Activated naive CD4-positive, alpha-beta T cell treated with anti-CD3 and anti-CD28 coated beads for 36 hours (primary cell): ENCODE measurements at regions of chr13 and their contacts with region 1.

Region 1: GRCh38 chr13:25574437-25575411 is 202.9 kb downstream of the ATP8A2 start:
- DNase-seq: peak; percentile 89
- H3K4me3 Mint-ChIP-seq: no peak overlapping the region
- H3K27ac Mint-ChIP-seq: no peak overlapping the region
- H3K4me1 Mint-ChIP-seq: no peaks in the 10 kb centered on the region
- H3K27me3 Mint-ChIP-seq: peaks cover 26% of the 10 kb centered on the region

Region 2: GRCh38 chr13:25319771-25320170 is 255.0 kb before region 1 on chr13:
- CTCF ChIA-PET with region 1: no interaction called
- intact Hi-C with region 1: no loop called
- DNase-seq: no peak
- H3K4me3 Mint-ChIP-seq: no peak overlapping the region
- H3K27ac Mint-ChIP-seq: no peak overlapping the region
- H3K4me1 Mint-ChIP-seq: peaks cover 7% of the 10 kb centered on the region
- H3K27me3 Mint-ChIP-seq: no peaks in the 10 kb centered on the region

Region 3: DNA sequence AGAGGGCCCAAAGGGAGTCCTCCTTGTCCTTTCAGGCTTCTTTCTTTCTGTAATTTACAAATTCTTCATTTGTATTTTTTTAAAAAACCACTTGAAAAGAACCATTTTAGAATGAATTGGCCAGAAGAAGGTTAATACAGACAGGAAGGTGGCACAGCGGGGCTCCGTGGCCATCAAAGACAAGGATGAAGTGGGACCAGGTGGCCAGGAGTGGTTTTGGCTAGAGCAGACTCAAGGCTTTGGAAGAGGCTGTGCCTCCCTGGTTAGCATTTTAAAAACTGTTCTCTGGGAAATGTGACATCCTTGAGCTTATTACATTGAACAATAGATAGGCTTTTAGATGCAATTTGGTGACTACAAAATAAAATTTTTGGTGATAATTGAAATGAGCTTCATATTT is 154.6 kb before region 1 on chr13:
- CTCF ChIA-PET with region 1: no interaction called
- intact Hi-C with region 1: no loop called
- DNase-seq: no peak
- H3K4me3 Mint-ChIP-seq: no peak overlapping the region
- H3K27ac Mint-ChIP-seq: no peak overlapping the region
- H3K4me1 Mint-ChIP-seq: no peaks in the 10 kb centered on the region
- H3K27me3 Mint-ChIP-seq: peaks cover 37% of the 10 kb centered on the region

Region 4: DNA sequence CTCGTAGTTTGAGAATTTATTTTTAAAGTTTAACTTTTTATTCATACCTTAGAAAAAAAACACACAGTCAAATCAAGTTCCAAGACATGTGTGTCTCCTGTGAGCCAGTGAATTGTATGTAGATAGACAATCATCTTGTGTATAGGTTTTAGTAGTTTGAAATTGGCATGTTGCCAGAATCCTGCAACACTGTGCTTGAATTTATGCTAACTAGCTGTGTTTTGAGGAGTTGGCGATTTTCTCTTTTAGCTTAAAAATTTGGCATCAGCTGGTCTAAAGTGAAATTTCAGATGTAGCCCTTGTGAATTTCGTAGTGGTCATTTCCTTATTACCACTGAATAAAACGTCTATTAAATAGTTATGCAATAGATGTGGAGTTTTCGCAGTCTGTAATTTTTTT is 10.3 kb after region 1 on chr13:
- CTCF ChIA-PET with region 1: interaction called, 10 read pairs
- intact Hi-C with region 1: no loop called
- DNase-seq: no peak
- H3K4me3 Mint-ChIP-seq: no peak overlapping the region
- H3K27ac Mint-ChIP-seq: no peak overlapping the region
- H3K4me1 Mint-ChIP-seq: no peaks in the 10 kb centered on the region
- H3K27me3 Mint-ChIP-seq: peaks cover 14% of the 10 kb centered on the region

Region 5: GRCh38 chr13:25733001-25733491 is 158.3 kb after region 1 on chr13:
- CTCF ChIA-PET with region 1: no interaction called
- intact Hi-C with region 1: no loop called
- DNase-seq: no peak
- H3K4me3 Mint-ChIP-seq: no peak overlapping the region
- H3K27ac Mint-ChIP-seq: no peak overlapping the region
- H3K4me1 Mint-ChIP-seq: peaks cover 13% of the 10 kb centered on the region
- H3K27me3 Mint-ChIP-seq: peaks cover 2% of the 10 kb centered on the region

Region 6: DNA sequence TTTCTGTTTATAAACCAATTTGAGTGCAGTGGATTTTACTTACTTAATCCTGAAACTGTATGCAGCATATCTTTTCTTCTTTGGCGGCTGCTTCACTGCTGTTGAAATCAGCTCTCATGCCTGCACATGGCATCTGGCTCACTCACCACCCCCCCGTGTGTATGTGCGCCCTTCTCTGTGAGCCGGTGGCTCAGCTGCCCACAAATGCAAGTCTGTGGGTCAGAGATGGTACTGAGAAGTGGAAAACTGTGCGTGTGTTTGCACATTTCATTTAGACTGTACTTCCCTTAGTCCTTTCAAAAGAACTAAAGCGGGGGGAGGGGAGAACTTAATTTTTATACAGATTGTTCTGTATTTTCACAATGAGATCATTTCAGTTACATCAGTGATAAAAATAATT is 169.5 kb after region 1 on chr13:
- CTCF ChIA-PET with region 1: interaction called, 4 read pairs
- intact Hi-C with region 1: loop called (anchors 10 kb)
- DNase-seq: no peak
- H3K4me3 Mint-ChIP-seq: no peak overlapping the region
- H3K27ac Mint-ChIP-seq: no peak overlapping the region
- H3K4me1 Mint-ChIP-seq: no peaks in the 10 kb centered on the region
- H3K27me3 Mint-ChIP-seq: no peaks in the 10 kb centered on the region

Region 7: DNA sequence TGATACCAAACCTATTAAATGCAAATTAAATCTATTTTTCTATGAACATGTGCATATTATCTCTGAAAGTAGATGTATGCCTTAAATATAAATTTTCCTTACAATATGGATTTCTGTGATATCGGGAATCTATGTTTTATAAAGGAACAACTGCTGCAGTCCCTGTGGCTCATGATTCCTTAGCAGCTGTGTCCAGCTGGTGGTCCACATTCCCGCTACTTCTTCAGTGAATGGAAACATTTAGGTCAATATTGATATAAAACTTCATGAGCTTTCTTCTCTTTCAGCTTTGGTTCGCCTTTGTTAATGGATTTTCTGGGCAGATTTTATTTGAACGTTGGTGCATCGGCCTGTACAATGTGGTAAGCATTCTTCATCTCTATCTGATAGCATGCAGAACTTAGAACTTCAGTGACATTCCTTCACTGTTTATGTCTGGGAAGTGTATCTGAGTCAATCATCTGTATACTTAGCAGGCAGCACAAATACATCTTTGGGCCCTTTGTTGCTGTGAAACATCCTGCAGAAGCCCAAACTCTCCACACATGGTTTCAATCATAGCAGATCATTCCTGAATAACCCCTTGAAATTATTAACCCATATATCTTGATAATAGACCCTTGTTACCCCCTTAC is 253.2 kb after region 1 on chr13:
- CTCF ChIA-PET with region 1: no interaction called
- intact Hi-C with region 1: loop called (anchors 2 kb)
- DNase-seq: no peak
- H3K4me3 Mint-ChIP-seq: no peak overlapping the region
- H3K27ac Mint-ChIP-seq: no peak overlapping the region
- H3K4me1 Mint-ChIP-seq: no peaks in the 10 kb centered on the region
- H3K27me3 Mint-ChIP-seq: no peaks in the 10 kb centered on the region

Region 8: GRCh38 chr13:26062844-26063444 is 488.2 kb after region 1 on chr13:
- CTCF ChIA-PET with region 1: interaction called, 14 read pairs
- intact Hi-C with region 1: loop called (anchors 1 kb)
- DNase-seq: peak; percentile 66
- H3K4me3 Mint-ChIP-seq: no peak overlapping the region
- H3K27ac Mint-ChIP-seq: no peak overlapping the region
- H3K4me1 Mint-ChIP-seq: no peaks in the 10 kb centered on the region
- H3K27me3 Mint-ChIP-seq: no peaks in the 10 kb centered on the region

Region 9: DNA sequence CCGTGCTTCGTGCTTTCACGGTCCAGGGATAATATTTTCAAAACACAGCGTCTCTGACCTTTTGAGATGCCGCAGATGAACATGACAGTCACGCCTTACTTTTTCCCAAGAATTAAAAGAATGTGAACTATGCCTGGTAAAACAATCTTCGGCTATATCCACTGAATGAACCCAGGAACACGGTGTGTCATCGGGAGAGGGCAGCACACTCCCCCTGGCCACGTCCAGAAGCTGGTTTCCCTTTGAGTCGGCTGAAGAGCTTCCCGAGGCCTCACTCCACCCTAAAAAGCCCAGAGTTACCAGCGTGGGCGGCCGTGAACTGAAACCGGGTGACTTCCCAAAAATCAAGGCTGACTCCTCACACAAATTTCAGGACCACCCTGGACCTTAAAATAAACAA is 500.0 kb after region 1 on chr13:
- CTCF ChIA-PET with region 1: interaction called, 16 read pairs
- intact Hi-C with region 1: loop called (anchors 1 kb)
- DNase-seq: no peak
- H3K4me3 Mint-ChIP-seq: no peak overlapping the region
- H3K27ac Mint-ChIP-seq: no peak overlapping the region
- H3K4me1 Mint-ChIP-seq: no peaks in the 10 kb centered on the region
- H3K27me3 Mint-ChIP-seq: peaks cover 22% of the 10 kb centered on the region

Region 10: GRCh38 chr13:27242706-27243105 is 1668.0 kb after region 1 on chr13:
- CTCF ChIA-PET with region 1: no interaction called
- intact Hi-C with region 1: no loop called
- DNase-seq: no peak
- H3K4me3 Mint-ChIP-seq: no peak overlapping the region
- H3K27ac Mint-ChIP-seq: no peak overlapping the region
- H3K4me1 Mint-ChIP-seq: peaks cover under 1% of the 10 kb centered on the region
- H3K27me3 Mint-ChIP-seq: no peaks in the 10 kb centered on the region